ENCODE measurements at regions of chr2 and their contacts with region 1.

Region 1: DNA sequence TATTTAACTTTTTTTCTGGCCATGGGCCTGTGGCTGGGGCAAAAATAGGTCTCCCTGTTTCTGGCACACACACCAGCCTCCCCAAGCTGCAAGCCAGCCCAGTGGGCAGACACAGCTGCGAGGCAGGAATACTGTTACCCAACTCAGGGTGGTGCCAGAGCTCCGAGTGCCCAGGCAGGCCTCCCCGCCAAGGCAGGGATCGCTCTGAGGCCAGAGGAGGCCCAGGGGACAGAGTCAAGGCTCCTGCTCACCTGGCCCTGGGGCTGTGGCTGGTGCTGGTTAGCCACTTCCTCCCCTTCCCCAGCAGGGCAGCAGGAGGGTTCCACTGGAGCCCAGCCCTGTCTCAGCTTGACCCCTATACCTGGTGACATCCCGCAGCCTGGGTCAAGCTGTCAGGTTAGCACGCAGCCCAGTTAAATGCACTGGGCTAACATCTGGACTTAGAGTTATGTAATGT is 67.1 kb upstream of the EPAS1 start:
- DNase-seq: peak; percentile 37
- ATAC-seq: peak; percentile 86
- H3K4me3 ChIP-seq: no peak overlapping the region
- H3K27ac ChIP-seq: peak overlapping the region; percentile 36
- H3K4me1 ChIP-seq: peaks cover 14% of the 10 kb centered on the region
- H3K27me3 ChIP-seq: no peaks in the 10 kb centered on the region
- CTCF ChIP-seq: peak; percentile 4 to 61 (median 45); a peak in 3 of 6 replicates
- EP300 ChIP-seq: no peak
- POLR2A ChIP-seq: no peak
- RAD21 ChIP-seq: peak; percentile 48; the same call in 1 of the 2 replicates

Region 2: DNA sequence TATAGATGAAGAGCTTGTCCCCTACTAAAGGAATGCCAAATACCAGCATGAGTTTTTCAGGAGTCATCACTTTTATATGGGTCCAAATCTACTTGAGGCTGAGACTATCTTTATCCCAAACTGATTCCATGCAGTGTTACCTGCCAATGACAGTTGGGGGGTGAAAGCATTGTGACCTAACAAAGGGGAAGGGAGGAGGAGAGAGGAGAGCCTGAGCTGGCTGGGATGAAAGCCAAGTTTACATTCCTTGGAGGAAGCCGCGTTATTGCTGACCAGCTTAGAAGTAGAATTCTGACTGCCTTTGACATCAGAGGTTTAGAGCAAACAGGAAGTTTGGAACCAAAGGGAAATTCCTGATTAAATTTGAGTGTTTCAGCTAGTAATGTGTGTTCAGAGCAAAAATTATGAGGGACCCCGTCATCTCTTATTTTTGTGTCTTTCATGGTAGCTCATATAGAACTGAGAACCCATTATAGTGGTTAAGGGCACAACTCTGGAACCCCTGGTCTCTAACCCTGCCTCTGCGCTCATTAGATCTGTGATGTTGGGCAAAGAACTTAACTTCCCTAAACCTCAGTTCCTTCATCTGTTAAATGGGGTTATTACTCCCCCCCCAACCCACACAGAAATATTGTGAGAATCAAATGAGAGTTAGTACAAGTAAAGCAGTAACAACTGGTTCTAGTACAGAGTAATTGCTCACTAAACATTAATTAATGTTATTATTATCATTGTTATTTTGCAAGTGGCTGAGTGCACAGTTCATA is 132.2 kb before region 1 on chr2:
- CTCF ChIA-PET with region 1: interaction called, 3 read pairs
- POLR2A ChIA-PET with region 1: no interaction called
- RAD21 ChIA-PET with region 1: interaction called, 6 read pairs
- SMC1A ChIA-PET with region 1: interaction called, 10 read pairs
- in situ Hi-C with region 1: no loop called
- intact Hi-C with region 1: loop called (anchors 5 kb)
- DNase-seq: no peak
- ATAC-seq: peak; percentile 65
- H3K4me3 ChIP-seq: no peak overlapping the region
- H3K27ac ChIP-seq: no peak overlapping the region
- H3K4me1 ChIP-seq: no peaks in the 10 kb centered on the region
- H3K27me3 ChIP-seq: no peaks in the 10 kb centered on the region
- CTCF ChIP-seq: no peak
- EP300 ChIP-seq: no peak
- POLR2A ChIP-seq: no peak
- RAD21 ChIP-seq: no peak

Region 3: DNA sequence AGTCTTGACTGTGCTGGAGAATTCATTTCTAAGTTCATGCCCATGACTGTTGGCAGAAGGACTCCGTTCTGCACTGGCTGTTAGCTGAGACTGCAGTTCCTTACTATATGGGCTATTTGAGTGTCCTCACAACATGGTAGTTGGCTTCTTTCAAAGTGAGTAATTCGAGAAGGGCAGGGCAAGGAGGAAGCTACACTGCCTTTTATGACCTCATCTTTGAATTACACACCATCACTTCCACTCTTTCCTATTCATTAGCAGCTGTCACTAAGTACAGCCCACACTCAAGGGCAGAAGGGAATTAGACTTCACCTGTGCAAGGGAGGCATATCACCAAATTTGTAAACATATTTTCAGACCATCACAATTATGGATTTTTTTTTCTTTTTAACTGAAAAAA is 11.2 kb after region 1 on chr2:
- CTCF ChIA-PET with region 1: interaction called, 14 read pairs
- POLR2A ChIA-PET with region 1: interaction called, 19 read pairs
- RAD21 ChIA-PET with region 1: interaction called, 33 read pairs
- SMC1A ChIA-PET with region 1: interaction called, 49 read pairs
- in situ Hi-C with region 1: no loop called
- intact Hi-C with region 1: loop called (anchors 1 kb)
- DNase-seq: no peak
- ATAC-seq: peak; percentile 74
- H3K4me3 ChIP-seq: no peak overlapping the region
- H3K27ac ChIP-seq: no peak overlapping the region
- H3K4me1 ChIP-seq: peaks cover 7% of the 10 kb centered on the region
- H3K27me3 ChIP-seq: no peaks in the 10 kb centered on the region
- CTCF ChIP-seq: no peak
- EP300 ChIP-seq: no peak
- POLR2A ChIP-seq: no peak
- RAD21 ChIP-seq: no peak

Region 4: DNA sequence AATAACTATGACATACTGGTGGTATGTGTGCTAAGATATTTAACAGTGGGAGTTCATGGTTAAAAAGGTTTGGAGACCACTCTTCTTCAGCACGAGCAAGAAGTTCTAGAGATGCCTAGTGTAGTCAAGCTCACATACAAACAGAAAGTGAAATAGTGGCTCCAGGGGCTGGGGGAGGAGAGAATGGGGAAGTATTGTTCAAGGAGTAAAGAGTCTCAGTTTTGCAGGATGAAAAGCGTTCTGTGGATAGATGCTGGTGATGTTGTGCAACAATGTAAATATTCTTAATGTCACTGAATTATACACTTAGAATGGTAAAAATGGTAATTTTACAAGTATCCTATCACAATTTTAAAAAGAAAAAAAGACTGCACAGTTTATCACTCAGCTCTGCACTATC is 38.1 kb after region 1 on chr2:
- CTCF ChIA-PET with region 1: interaction called, 6 read pairs
- POLR2A ChIA-PET with region 1: interaction called, 6 read pairs
- RAD21 ChIA-PET with region 1: interaction called, 12 read pairs
- SMC1A ChIA-PET with region 1: interaction called, 12 read pairs
- in situ Hi-C with region 1: no loop called
- intact Hi-C with region 1: loop called (anchors 2 kb)
- DNase-seq: peak; percentile 21
- ATAC-seq: peak; percentile 90
- H3K4me3 ChIP-seq: no peak overlapping the region
- H3K27ac ChIP-seq: no peak overlapping the region
- H3K4me1 ChIP-seq: no peaks in the 10 kb centered on the region
- H3K27me3 ChIP-seq: no peaks in the 10 kb centered on the region
- CTCF ChIP-seq: no peak
- EP300 ChIP-seq: no peak
- POLR2A ChIP-seq: no peak
- RAD21 ChIP-seq: no peak

Region 5: DNA sequence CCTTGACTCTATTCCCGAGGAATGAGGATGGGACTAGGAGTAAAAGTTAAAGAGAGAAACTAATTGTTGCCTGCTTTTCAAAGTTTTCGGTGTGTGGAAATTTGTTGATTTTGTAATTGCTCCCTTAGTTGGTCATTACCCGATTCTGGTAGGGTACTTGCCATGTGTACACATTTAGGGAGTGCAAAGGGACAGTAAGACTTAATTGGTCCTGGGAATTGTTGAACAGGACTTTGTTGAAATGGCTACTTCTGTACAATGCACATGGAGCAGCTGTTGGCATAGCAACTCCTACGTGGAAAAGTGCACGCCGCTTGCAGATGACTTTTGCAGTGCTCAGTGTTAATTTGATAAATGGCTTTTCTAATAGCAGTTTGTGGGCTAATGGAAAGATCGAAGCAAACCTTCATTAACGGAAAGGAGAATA is 90.0 kb after region 1 on chr2:
- CTCF ChIA-PET with region 1: interaction called, 3 read pairs
- POLR2A ChIA-PET with region 1: no interaction called
- RAD21 ChIA-PET with region 1: interaction called, 6 read pairs
- SMC1A ChIA-PET with region 1: interaction called, 22 read pairs
- in situ Hi-C with region 1: no loop called
- intact Hi-C with region 1: no loop called
- DNase-seq: no peak
- ATAC-seq: no peak
- H3K4me3 ChIP-seq: no peak overlapping the region
- H3K27ac ChIP-seq: no peak overlapping the region
- H3K4me1 ChIP-seq: no peaks in the 10 kb centered on the region
- H3K27me3 ChIP-seq: no peaks in the 10 kb centered on the region; a peak in 1 of 4 replicates
- CTCF ChIP-seq: no peak
- EP300 ChIP-seq: no peak
- POLR2A ChIP-seq: no peak
- RAD21 ChIP-seq: no peak

Region 6: GRCh38 chr2:46461011-46461674 is 231.0 kb after region 1 on chr2:
- CTCF ChIA-PET with region 1: interaction called, 17 read pairs
- POLR2A ChIA-PET with region 1: no interaction called
- RAD21 ChIA-PET with region 1: interaction called, 3 read pairs
- SMC1A ChIA-PET with region 1: interaction called, 26 read pairs
- in situ Hi-C with region 1: no loop called
- intact Hi-C with region 1: loop called (anchors 2 kb)
- DNase-seq: peak; percentile 39
- ATAC-seq: peak; percentile 85
- H3K4me3 ChIP-seq: no peak overlapping the region; the same call in 1 of the 2 replicates
- H3K27ac ChIP-seq: 0 out of 2 replicates have a peak overlapping the region, but pooled peaks have one; percentile 0
- H3K4me1 ChIP-seq: peaks cover 18% of the 10 kb centered on the region
- H3K27me3 ChIP-seq: no peaks in the 10 kb centered on the region; a peak in 1 of 4 replicates
- CTCF ChIP-seq: peak; percentile 97 to 99 (median 99); a peak in 5 of 6 replicates
- EP300 ChIP-seq: no peak
- POLR2A ChIP-seq: no peak
- RAD21 ChIP-seq: peak; percentile 96